ENCODE measurements at regions of chr20 and their contacts with region 1.

Region 1: GRCh38 chr20:16175322-16175957 is 397.8 kb downstream of the KIF16B start:
- DNase-seq: no peak
- H3K4me3 ChIP-seq: no peak overlapping the region
- H3K27ac ChIP-seq: no peak overlapping the region
- H3K4me1 ChIP-seq: no peaks in the 10 kb centered on the region
- H3K27me3 ChIP-seq: no peaks in the 10 kb centered on the region
- CTCF ChIP-seq: no peak

Region 2: DNA sequence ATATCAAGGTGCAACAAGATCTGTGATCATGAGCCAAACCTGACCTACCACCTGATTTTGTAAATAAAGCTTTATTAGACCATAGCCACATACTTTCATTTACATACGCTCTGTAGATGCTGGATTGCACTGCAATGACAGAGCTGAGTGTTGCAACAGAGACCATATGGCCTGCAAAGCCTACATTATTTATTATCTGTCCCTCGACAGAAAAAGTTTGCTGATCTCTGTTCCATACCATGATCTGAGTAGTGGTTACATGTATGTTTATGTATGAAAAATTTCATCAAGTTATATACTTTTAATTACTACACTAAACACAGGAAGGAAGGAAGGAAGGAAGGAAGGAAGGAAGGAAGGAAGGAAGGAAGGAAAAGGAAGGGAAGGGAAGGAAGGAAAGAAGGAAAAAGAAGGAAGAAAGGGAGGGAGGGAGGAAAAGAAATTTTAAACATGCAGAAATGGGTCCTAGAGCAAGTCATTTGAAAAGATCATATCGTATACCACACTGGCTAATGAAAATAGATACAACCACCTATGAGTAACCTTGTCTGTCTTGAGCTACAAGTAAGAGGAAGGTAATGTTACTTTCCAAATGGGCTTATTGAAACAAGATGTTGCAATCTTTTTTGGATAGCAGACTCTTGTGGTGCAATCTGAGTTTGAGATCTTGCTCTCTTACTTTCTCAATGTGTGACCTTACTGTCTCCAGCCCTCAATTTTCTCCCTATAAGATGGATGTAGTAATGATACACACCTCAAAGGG is 43.2 kb before region 1 on chr20:
- CTCF ChIA-PET with region 1: no interaction called
- POLR2A ChIA-PET with region 1: no interaction called
- intact Hi-C with region 1: loop called (anchors 1 kb)
- DNase-seq: no peak
- H3K4me3 ChIP-seq: no peak overlapping the region
- H3K27ac ChIP-seq: no peak overlapping the region
- H3K4me1 ChIP-seq: no peaks in the 10 kb centered on the region
- H3K27me3 ChIP-seq: no peaks in the 10 kb centered on the region
- CTCF ChIP-seq: no peak

Measured in PC-9 (cell line).